ENCODE measurements at regions of chr20 and their contacts with region 1.

Region 1: GRCh38 chr20:24992487-24993205 is at the start of gene APMAP:
- DNase-seq: peak; percentile 46 to 95
- H3K4me3 ChIP-seq: peak within 1 kb of the TSS; percentile 75 to 86 (median 84)
- H3K27ac ChIP-seq: no peak within 1 kb of the TSS
- H3K4me1 ChIP-seq: peaks cover 0 to 7% (median 0%) of the 10 kb centered on the region in 4 experiments; a peak in 1 of 7 replicates
- H3K27me3 ChIP-seq: no peaks in the 10 kb centered on the region; a peak in 1 of 7 replicates
- CTCF ChIP-seq: no peak
- EP300 ChIP-seq: no peak
- POLR2A ChIP-seq: peak; percentile 48 to 79; a peak in 2 of 3 replicates
- RAD21 ChIP-seq: no peak
- total RNA-seq, gene APMAP: 63.6 and 66.0 TPM in 2 replicates

Region 2: DNA sequence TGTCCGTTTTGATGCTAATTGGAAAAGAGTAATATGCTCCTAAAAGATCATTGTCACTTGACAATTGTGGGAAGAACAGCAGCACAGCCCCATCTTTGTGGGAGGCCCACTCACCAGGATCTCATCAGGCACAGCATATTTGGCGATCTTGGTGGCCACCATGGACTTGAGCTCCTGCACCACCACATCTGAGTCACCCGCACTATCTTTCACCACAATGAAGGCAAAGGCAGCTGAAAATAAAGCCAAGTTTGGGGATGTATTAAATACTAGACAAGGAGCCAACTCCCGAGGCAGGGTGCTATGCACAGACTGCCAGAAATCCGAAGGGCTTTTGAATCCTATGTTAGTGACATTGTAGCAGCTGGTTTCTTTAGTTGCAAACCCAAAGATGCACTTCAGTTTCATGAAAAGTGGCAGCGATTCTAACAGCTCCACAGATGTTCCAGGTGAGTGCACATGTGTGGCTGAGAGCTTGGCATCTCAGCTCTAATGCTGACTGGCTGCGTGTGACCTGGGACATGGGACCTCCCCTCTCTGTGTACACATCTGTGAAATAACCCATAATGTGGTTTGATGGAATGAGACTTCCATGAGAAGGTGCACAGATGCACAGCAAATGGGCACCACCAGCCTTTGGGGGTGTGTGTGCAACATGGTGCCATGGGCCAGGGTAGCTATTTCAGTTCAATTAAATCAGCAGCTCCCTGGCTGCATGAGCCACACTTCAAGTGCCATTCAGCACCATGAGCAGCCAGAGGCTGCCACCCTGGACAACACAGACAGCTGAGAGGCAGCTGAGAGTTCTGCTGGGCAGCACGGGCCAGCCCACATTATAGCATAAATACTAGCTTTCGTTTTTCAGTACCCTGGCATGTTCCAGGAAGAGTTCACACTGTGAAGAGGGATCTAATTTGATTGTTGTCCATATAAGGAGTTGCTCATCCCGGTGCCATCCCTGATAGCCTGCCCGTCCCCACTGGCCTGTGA is 16.8 kb after region 1 on chr20:
- CTCF ChIA-PET with region 1: interaction called, 23 read pairs
- POLR2A ChIA-PET with region 1: no interaction called
- DNase-seq: no peak
- H3K4me3 ChIP-seq: no peak overlapping the region
- H3K27ac ChIP-seq: no peak overlapping the region
- H3K4me1 ChIP-seq: no peaks in the 10 kb centered on the region; a peak in 1 of 7 replicates
- H3K27me3 ChIP-seq: no peaks in the 10 kb centered on the region
- CTCF ChIP-seq: no peak
- EP300 ChIP-seq: no peak
- POLR2A ChIP-seq: no peak
- RAD21 ChIP-seq: no peak

Measured in H1 (cell line).